CD14-positive monocyte (primary cell): ENCODE measurements at regions of chrX and their contacts with region 1.

Region 1: GRCh38 chrX:1246816-1247215 is 21.8 kb upstream of the CSF2RA start:
- DNase-seq: peak; percentile 80 to 82 (median 82)
- H3K4me3 ChIP-seq: no peak overlapping the region
- H3K4me3 Mint-ChIP-seq: no peak overlapping the region
- H3K27ac ChIP-seq: no peak overlapping the region
- H3K27ac Mint-ChIP-seq: peak overlapping the region in 6 of 7 donors; percentile 26 to 82 (median 72)
- H3K4me1 ChIP-seq: peaks cover 42 to 43% of the 10 kb centered on the region in 2 donors
- H3K4me1 Mint-ChIP-seq: peaks cover 46% of the 10 kb centered on the region
- H3K27me3 ChIP-seq: peaks cover 0 to 3% of the 10 kb centered on the region in 2 donors
- H3K27me3 Mint-ChIP-seq: peaks cover 2 to 22% (median 17%) of the 10 kb centered on the region in 3 donors
- CTCF ChIP-seq: peak; percentile 83

Region 2: DNA sequence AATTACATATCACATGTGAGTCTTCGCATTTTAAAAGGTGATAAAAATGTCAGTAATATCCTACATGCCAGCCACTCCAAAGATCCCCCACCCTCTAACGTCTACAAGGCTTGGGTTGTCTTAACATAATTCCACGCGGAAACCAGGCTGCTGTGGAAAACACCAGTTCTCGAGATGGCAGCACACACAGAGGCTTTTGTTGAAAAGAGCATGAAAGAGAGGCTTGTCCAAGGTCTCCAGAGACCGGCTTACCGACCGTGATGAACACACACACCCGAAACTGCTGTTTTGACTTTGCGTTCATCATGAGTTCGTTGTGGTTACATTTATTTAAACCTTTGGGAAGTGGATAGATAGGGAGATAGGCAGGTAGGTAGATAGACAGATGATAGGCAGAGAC is 122.3 kb before region 1 on chrX:
- intact Hi-C with region 1: no loop called
- DNase-seq: no peak
- H3K4me3 ChIP-seq: no peak overlapping the region
- H3K4me3 Mint-ChIP-seq: no peak overlapping the region
- H3K27ac ChIP-seq: no peak overlapping the region
- H3K27ac Mint-ChIP-seq: no peak overlapping the region
- H3K4me1 ChIP-seq: peaks cover 0 to 4% of the 10 kb centered on the region in 2 donors
- H3K4me1 Mint-ChIP-seq: peaks cover 9% of the 10 kb centered on the region
- H3K27me3 ChIP-seq: no peaks in the 10 kb centered on the region
- H3K27me3 Mint-ChIP-seq: peaks cover 3 to 16% (median 12%) of the 10 kb centered on the region in 3 donors
- CTCF ChIP-seq: no peak

Region 3: GRCh38 chrX:1178580-1179057 is 68.2 kb before region 1 on chrX:
- intact Hi-C with region 1: no loop called
- DNase-seq: no peak
- H3K4me3 ChIP-seq: no peak overlapping the region
- H3K4me3 Mint-ChIP-seq: no peak overlapping the region
- H3K27ac ChIP-seq: no peak overlapping the region
- H3K27ac Mint-ChIP-seq: no peak overlapping the region
- H3K4me1 ChIP-seq: no peaks in the 10 kb centered on the region
- H3K4me1 Mint-ChIP-seq: peaks cover 6% of the 10 kb centered on the region
- H3K27me3 ChIP-seq: no peaks in the 10 kb centered on the region
- H3K27me3 Mint-ChIP-seq: peaks cover 0 to 6% (median 0%) of the 10 kb centered on the region in 3 donors
- CTCF ChIP-seq: no peak

Region 4: GRCh38 chrX:1205680-1206611 is 40.9 kb before region 1 on chrX:
- intact Hi-C with region 1: loop called in 1 of 2 experiments (anchors 5 kb)
- DNase-seq: peak; percentile 64 to 77 (median 71)
- H3K4me3 ChIP-seq: peak overlapping the region; percentile 32 to 69 (median 43)
- H3K4me3 Mint-ChIP-seq: peak overlapping the region; percentile 69 to 77
- H3K27ac ChIP-seq: no peak overlapping the region
- H3K27ac Mint-ChIP-seq: peak overlapping the region in 5 of 7 donors; percentile 44 to 66 (median 46)
- H3K4me1 ChIP-seq: peaks cover 27 to 29% of the 10 kb centered on the region in 2 donors
- H3K4me1 Mint-ChIP-seq: peaks cover 34% of the 10 kb centered on the region
- H3K27me3 ChIP-seq: no peaks in the 10 kb centered on the region
- H3K27me3 Mint-ChIP-seq: peaks cover 6 to 10% (median 7%) of the 10 kb centered on the region in 3 donors
- CTCF ChIP-seq: no peak

Region 5: DNA sequence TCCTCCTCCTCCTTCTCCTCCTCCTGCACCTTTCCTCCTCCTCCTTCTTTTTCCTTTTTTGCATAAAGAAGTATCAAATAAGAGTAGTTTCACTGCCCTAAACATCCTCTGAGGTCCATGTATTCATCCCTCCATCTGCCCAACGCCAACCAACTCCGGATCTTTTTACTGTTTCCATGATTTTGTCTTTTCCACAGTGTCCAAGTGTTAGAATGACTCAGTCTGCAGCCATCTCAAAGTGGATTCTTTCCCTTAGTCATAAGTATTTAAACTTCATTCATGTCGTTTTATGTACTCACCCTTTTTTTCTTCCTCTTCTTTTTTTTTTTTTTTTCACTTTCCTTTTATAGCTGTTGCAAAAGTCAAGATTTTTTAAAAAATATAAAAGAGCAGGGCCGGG is 34.7 kb after region 1 on chrX:
- intact Hi-C with region 1: loop called (anchors 5 kb)
- DNase-seq: peak; percentile 38 to 72 (median 62)
- H3K4me3 ChIP-seq: peak overlapping the region in 1 of 3 experiments; percentile 41
- H3K4me3 Mint-ChIP-seq: peak overlapping the region in 1 of 2 donors; percentile 55
- H3K27ac ChIP-seq: peak overlapping the region; percentile 33 to 73
- H3K27ac Mint-ChIP-seq: peak overlapping the region; percentile 85 to 95 (median 92)
- H3K4me1 ChIP-seq: peaks cover 35 to 56% of the 10 kb centered on the region in 2 donors
- H3K4me1 Mint-ChIP-seq: peaks cover 50% of the 10 kb centered on the region
- H3K27me3 ChIP-seq: no peaks in the 10 kb centered on the region
- H3K27me3 Mint-ChIP-seq: no peaks in the 10 kb centered on the region
- CTCF ChIP-seq: no peak

Region 6: GRCh38 chrX:1316527-1316926 is 69.7 kb after region 1 on chrX:
- intact Hi-C with region 1: loop called (anchors 5 kb)
- DNase-seq: peak; percentile 98 to 99 (median 98)
- H3K4me3 ChIP-seq: peak overlapping the region in 1 of 3 experiments; percentile 51
- H3K4me3 Mint-ChIP-seq: peak overlapping the region; percentile 58 to 79
- H3K27ac ChIP-seq: peak overlapping the region; percentile 81 to 90
- H3K27ac Mint-ChIP-seq: peak overlapping the region; percentile 94 to 99 (median 95)
- H3K4me1 ChIP-seq: peaks cover 48 to 57% of the 10 kb centered on the region in 2 donors
- H3K4me1 Mint-ChIP-seq: peaks cover 55% of the 10 kb centered on the region
- H3K27me3 ChIP-seq: no peaks in the 10 kb centered on the region
- H3K27me3 Mint-ChIP-seq: peaks cover 0 to 4% (median 0%) of the 10 kb centered on the region in 3 donors
- CTCF ChIP-seq: no peak

Region 7: DNA sequence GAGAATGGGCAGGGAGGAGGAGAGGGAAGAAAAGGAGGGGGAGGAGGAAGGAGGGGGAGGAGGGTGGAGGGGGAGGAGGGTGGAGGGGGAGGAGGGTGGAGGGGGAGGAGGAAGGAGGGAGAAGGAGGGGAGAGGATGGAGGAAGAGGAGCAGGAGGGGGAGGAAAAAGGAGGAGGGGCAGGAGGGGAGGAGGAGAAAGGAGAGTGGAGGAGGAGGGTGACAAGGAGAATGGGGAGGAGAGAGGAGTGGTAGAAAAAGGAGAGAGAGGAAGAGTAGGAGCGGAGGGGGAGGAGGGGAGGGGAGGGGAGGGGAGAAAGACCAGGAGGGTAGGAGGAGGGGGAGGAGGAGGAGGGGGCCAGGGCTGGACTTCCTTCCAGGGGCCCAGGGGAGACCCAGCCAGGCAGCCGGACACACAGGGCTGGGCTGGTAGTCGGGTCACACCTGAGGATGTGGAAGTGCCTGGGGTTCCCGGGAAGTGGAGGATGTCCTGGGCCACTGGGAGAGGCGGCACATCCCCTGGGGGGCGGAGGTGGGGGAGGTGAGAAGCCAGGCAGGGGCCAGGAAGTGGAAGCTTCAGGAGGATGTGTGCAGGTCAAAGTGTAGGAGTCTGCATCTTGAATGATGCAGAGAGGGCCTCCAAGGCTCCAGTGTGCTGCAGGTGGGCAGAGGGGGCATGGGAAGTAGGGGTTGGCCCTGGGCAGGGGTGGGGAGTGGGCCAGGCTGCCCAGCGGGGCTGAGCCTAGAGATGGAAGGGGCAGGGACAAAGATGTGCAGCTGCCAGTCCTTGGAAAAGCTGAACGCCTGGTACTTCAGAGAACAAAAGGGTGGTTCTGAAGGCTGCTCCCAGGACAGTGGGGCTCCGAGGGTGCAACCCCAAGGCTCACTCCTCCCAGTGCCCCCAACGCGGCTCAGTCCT is 108.6 kb after region 1 on chrX:
- intact Hi-C with region 1: no loop called
- DNase-seq: no peak
- H3K4me3 ChIP-seq: no peak overlapping the region
- H3K4me3 Mint-ChIP-seq: no peak overlapping the region
- H3K27ac ChIP-seq: no peak overlapping the region
- H3K27ac Mint-ChIP-seq: no peak overlapping the region
- H3K4me1 ChIP-seq: peaks cover 0 to 6% of the 10 kb centered on the region in 2 donors
- H3K4me1 Mint-ChIP-seq: peaks cover 3% of the 10 kb centered on the region
- H3K27me3 ChIP-seq: no peaks in the 10 kb centered on the region
- H3K27me3 Mint-ChIP-seq: peaks cover 1 to 3% (median 3%) of the 10 kb centered on the region in 3 donors
- CTCF ChIP-seq: no peak

Region 8: GRCh38 chrX:1391707-1392375 is 145.0 kb after region 1 on chrX and contains the start of gene SLC25A6:
- intact Hi-C with region 1: loop called (anchors 10 kb)
- DNase-seq: peak; percentile 97 to 98 (median 98)
- H3K4me3 ChIP-seq: peak within 1 kb of the TSS; percentile 76 to 98 (median 93)
- H3K4me3 Mint-ChIP-seq: peak within 1 kb of the TSS; percentile 89 to 90
- H3K27ac ChIP-seq: peak within 1 kb of the TSS; percentile 95
- H3K27ac Mint-ChIP-seq: peak within 1 kb of the TSS; percentile 93 to 97 (median 96)
- H3K4me1 ChIP-seq: peaks cover 17 to 34% of the 10 kb centered on the region in 2 donors
- H3K4me1 Mint-ChIP-seq: peaks cover 22% of the 10 kb centered on the region
- H3K27me3 ChIP-seq: no peaks in the 10 kb centered on the region
- H3K27me3 Mint-ChIP-seq: peaks cover 0 to 2% (median 0%) of the 10 kb centered on the region in 3 donors
- CTCF ChIP-seq: peak; percentile 30
- polyA plus RNA-seq, gene SLC25A6: 442 to 769 (median 449) TPM

Region 9: GRCh38 chrX:1411291-1411720 is 164.5 kb after region 1 on chrX:
- intact Hi-C with region 1: no loop called
- DNase-seq: no peak
- H3K4me3 ChIP-seq: no peak overlapping the region
- H3K4me3 Mint-ChIP-seq: no peak overlapping the region
- H3K27ac ChIP-seq: no peak overlapping the region
- H3K27ac Mint-ChIP-seq: peak overlapping the region in 2 of 7 donors; percentile 28 to 46
- H3K4me1 ChIP-seq: no peaks in the 10 kb centered on the region
- H3K4me1 Mint-ChIP-seq: no peaks in the 10 kb centered on the region
- H3K27me3 ChIP-seq: no peaks in the 10 kb centered on the region
- H3K27me3 Mint-ChIP-seq: no peaks in the 10 kb centered on the region
- CTCF ChIP-seq: no peak